ENCODE measurements at regions of chr17 and their contacts with region 1.

Region 1: DNA sequence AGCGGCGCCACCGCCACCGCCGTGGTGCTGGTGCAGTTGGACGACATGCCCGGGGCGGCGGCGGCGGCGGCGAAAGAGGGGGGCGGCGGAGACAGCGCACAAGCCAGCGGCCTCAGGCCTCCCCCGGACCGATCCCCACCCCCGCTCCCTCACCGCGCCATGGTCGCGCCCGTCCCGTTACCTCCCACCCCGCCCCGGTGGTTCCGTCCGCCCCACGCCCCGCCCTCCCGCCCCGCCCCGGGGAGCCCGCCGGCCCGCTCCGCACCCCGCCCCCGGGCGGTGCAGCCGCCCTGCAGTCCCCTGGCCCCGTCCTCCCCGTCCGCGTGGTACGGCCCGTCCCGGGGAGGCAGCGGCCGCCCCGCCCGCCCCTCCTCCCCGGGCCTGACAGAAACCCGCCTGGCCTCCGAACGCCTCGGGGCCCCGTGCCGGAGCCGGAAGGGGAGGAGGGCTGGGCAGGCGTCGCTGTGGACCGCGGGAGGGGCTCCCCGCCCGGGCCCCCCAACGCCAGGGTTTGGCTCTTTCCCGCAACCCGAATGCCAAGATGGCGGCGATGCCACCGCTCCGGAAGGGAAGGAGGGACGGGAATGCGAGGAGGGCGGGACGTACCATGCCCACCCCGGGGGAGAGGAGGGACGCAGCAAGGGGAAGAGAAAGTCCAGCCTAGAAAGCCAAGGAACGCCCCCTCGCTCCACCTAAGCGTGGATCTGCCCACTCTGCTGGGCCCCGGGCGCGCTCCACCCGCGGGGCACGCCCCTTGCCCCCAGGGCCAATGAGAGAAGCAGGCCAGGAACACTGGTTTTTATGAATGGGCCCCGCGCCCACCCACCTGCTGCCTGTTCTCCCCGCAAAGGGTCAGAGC is at the start of gene PIP4K2B:
- DNase-seq: peak; percentile 97 to 98 (median 97)
- ATAC-seq: peak; percentile 93
- H3K4me3 ChIP-seq: peak within 1 kb of the TSS; percentile 87
- H3K27ac ChIP-seq: peak within 1 kb of the TSS; percentile 98
- H3K4me1 ChIP-seq: peaks cover 20% of the 10 kb centered on the region in 2 experiments
- H3K27me3 ChIP-seq: no peaks in the 10 kb centered on the region
- CTCF ChIP-seq: no peak
- EP300 ChIP-seq: no peak
- POLR2A ChIP-seq: peak; percentile 88
- RAD21 ChIP-seq: no peak
- polyA plus RNA-seq, gene PIP4K2B: 3.7 to 5.7 TPM

Region 2: GRCh38 chr17:38403491-38403890 is 396.1 kb before region 1 on chr17:
- CTCF ChIA-PET with region 1: no interaction called
- POLR2A ChIA-PET with region 1: no interaction called
- in situ Hi-C with region 1: no loop called
- intact Hi-C with region 1: no loop called
- DNase-seq: no peak
- ATAC-seq: peak; percentile 69
- H3K4me3 ChIP-seq: no peak overlapping the region
- H3K27ac ChIP-seq: no peak overlapping the region
- H3K4me1 ChIP-seq: no peaks in the 10 kb centered on the region; a peak in 2 of 5 replicates
- H3K27me3 ChIP-seq: no peaks in the 10 kb centered on the region
- CTCF ChIP-seq: no peak
- EP300 ChIP-seq: no peak
- POLR2A ChIP-seq: no peak
- RAD21 ChIP-seq: no peak

Region 3: GRCh38 chr17:38789185-38789584 is 10.4 kb before region 1 on chr17:
- CTCF ChIA-PET with region 1: no interaction called
- POLR2A ChIA-PET with region 1: interaction called, 19 read pairs
- in situ Hi-C with region 1: no loop called
- intact Hi-C with region 1: no loop called
- DNase-seq: peak in 1 of 4 experiments; percentile 12
- ATAC-seq: no peak; the same call in 2 of the 3 replicates
- H3K4me3 ChIP-seq: no peak overlapping the region
- H3K27ac ChIP-seq: no peak overlapping the region
- H3K4me1 ChIP-seq: no peaks in the 10 kb centered on the region
- H3K27me3 ChIP-seq: no peaks in the 10 kb centered on the region
- CTCF ChIP-seq: no peak
- EP300 ChIP-seq: no peak
- POLR2A ChIP-seq: no peak
- RAD21 ChIP-seq: no peak

Region 4: DNA sequence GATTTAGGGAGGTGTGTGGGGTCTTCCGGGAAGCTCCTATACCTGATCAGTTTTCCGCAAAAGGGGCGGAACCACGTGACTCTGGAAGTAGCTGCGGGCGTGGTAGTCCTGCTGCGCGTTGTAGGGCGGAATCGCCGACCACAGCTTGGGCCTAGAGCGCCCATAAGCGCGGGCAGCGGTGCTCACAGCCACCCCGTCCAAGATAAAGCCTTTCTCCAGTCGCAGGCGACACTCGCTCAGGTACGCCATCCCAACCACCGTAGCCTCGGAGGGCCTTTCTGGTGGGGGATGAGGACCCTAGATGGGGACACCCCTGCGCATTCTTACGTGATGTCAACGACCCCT is 41.5 kb after region 1 on chr17:
- CTCF ChIA-PET with region 1: no interaction called
- POLR2A ChIA-PET with region 1: no interaction called
- in situ Hi-C with region 1: no loop called
- intact Hi-C with region 1: no loop called
- DNase-seq: no peak
- ATAC-seq: no peak
- H3K4me3 ChIP-seq: no peak overlapping the region
- H3K27ac ChIP-seq: no peak overlapping the region
- H3K4me1 ChIP-seq: peaks cover 0 to 20% of the 10 kb centered on the region in 2 experiments; a peak in 2 of 5 replicates
- H3K27me3 ChIP-seq: no peaks in the 10 kb centered on the region
- CTCF ChIP-seq: no peak
- EP300 ChIP-seq: no peak
- POLR2A ChIP-seq: no peak
- RAD21 ChIP-seq: no peak

Measured in K562 (cell line).